ENCODE measurements at regions of chr13 and their contacts with region 1.

Region 1: DNA sequence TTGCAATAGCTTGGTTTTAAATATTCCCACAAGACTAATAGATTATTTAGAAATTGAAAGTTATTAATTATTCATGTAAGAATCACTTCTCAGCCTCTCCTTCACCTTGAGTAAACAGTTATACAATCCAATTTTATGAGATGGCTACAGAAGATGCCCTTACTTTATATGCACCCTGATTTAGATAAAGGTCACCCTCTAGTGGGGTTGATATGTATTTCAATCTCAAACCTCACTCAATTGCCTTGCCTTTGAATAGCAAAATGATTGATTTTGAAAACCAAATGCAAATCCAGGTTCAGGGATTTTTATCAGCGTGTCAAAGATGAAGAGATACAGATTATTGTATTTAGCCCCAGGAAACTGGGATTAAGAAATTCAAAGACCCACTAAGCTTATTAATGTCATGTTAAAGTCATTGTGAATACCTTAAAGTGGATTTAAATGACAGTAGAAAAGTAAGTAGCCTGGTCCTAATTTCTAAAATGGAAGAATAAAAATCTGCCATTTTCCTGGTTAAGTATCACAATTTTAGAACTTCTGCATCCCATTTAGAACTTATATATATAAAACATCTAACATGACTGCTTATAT is 305.1 kb downstream of the ITGBL1 start:
- DNase-seq: no peak
- H3K4me3 ChIP-seq: no peak overlapping the region
- H3K27me3 ChIP-seq: peaks cover 2% of the 10 kb centered on the region; the same call in 1 of the 2 replicates
- CTCF ChIP-seq: peak; percentile 57

Region 2: DNA sequence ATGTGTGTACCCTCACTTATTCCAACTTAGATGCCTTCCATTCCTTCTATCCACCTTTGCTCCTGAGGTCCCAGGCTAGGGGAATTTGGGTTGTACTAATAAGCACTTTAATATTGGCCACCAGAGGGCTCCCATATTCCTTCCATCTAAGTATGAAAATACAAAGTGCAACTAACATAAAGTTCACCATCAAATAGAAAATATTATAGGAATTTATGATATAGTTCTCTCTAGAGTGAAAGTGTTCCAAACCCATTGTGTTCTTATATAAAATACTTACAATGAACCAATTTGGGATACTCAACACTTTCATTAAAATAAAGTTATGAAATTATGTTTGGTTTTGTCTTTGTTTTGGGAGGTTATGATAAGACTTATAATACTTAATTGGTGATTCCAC is 242.8 kb before region 1 on chr13:
- CTCF ChIA-PET with region 1: interaction called, 10 read pairs
- POLR2A ChIA-PET with region 1: no interaction called
- DNase-seq: no peak
- H3K4me3 ChIP-seq: no peak overlapping the region
- H3K27me3 ChIP-seq: no peaks in the 10 kb centered on the region
- CTCF ChIP-seq: peak; percentile 70

Region 3: GRCh38 chr13:101523154-101524131 is 234.1 kb before region 1 on chr13:
- CTCF ChIA-PET with region 1: interaction called, 10 read pairs
- POLR2A ChIA-PET with region 1: no interaction called
- DNase-seq: peak; percentile 26
- H3K4me3 ChIP-seq: no peak overlapping the region
- H3K27me3 ChIP-seq: no peaks in the 10 kb centered on the region
- CTCF ChIP-seq: no peak

Region 4: GRCh38 chr13:101730420-101731000 is 27.0 kb before region 1 on chr13:
- CTCF ChIA-PET with region 1: no interaction called
- POLR2A ChIA-PET with region 1: no interaction called
- DNase-seq: no peak
- H3K4me3 ChIP-seq: no peak overlapping the region
- H3K27me3 ChIP-seq: no peaks in the 10 kb centered on the region
- CTCF ChIP-seq: no peak

Measured in BJ (cell line).